Activated CD4-positive, alpha-beta memory T cell treated with anti-CD3 and anti-CD28 coated beads for 36 hours (primary cell): ENCODE measurements at regions of chr12 and their contacts with region 1.

Region 1: GRCh38 chr12:24838531-24838950 is 110.4 kb downstream of the BCAT1 start:
- DNase-seq: peak; percentile 57
- H3K4me3 Mint-ChIP-seq: peak overlapping the region; percentile 20
- H3K27ac Mint-ChIP-seq: peak overlapping the region; percentile 85
- H3K4me1 Mint-ChIP-seq: peaks cover 44% of the 10 kb centered on the region
- H3K27me3 Mint-ChIP-seq: peaks cover 5% of the 10 kb centered on the region

Region 2: GRCh38 chr12:23204933-23205778 is 1633.4 kb before region 1 on chr12:
- CTCF ChIA-PET with region 1: interaction called, 7 read pairs
- POLR2A ChIA-PET with region 1: no interaction called
- intact Hi-C with region 1: loop called (anchors 2 kb)
- DNase-seq: no peak
- H3K4me3 Mint-ChIP-seq: no peak overlapping the region
- H3K27ac Mint-ChIP-seq: no peak overlapping the region
- H3K4me1 Mint-ChIP-seq: no peaks in the 10 kb centered on the region
- H3K27me3 Mint-ChIP-seq: peaks cover 3% of the 10 kb centered on the region

Region 3: DNA sequence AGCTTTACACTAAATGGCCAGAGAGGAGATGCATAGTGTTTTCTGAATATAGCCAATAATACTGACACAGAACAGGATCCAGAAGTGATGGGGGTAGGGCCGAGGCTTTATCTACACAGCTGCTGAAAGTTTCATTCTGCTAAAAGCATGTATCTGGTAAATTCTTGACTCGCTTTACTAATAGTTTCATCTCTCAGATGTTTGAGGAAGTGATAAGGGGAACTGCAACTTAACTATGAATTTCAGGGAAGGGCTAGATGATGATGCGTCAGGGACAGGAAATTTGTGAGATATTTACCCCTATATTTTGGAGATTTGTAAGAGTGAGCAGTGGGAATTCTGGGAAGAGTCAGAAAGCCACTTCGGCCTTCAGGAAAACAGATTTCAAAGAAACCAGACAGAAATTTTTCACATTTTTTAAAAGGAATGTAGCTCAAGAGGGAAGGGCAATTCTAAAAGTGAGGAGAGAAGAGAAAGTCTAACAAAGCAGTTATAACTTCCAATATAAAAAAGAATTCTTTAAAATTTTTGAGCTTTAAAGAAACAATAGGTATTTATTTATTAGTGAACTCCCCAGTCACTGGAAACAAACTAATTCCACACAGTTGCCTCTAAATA is 132.7 kb before region 1 on chr12:
- CTCF ChIA-PET with region 1: no interaction called
- POLR2A ChIA-PET with region 1: interaction called, 16 read pairs
- intact Hi-C with region 1: loop called (anchors 1 kb)
- DNase-seq: peak; percentile 38
- H3K4me3 Mint-ChIP-seq: peak overlapping the region; percentile 6
- H3K27ac Mint-ChIP-seq: peak overlapping the region; percentile 73
- H3K4me1 Mint-ChIP-seq: peaks cover 21% of the 10 kb centered on the region
- H3K27me3 Mint-ChIP-seq: peaks cover 3% of the 10 kb centered on the region

Region 4: DNA sequence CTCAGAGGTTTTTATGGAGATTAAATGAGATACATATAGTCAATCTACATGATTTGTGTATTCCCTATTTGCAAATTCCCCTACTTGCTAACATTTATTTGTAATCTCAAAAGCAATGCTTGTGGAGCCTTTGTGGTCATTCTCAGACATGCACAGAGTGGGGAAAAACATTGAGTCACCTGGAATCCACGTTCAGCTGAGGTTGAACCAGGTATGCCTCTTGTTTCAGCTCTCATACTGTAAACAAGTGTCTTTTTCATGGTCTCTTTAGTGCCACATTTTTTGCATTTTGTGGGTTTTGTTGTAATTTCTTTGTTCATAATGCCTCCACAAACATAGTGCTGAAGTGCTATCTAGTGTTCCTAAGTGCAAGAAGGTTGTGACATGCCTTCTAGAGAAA is 71.5 kb before region 1 on chr12:
- CTCF ChIA-PET with region 1: interaction called, 4 read pairs
- POLR2A ChIA-PET with region 1: no interaction called
- intact Hi-C with region 1: loop called (anchors 1 kb)
- DNase-seq: peak; percentile 36
- H3K4me3 Mint-ChIP-seq: no peak overlapping the region
- H3K27ac Mint-ChIP-seq: peak overlapping the region; percentile 69
- H3K4me1 Mint-ChIP-seq: peaks cover 13% of the 10 kb centered on the region
- H3K27me3 Mint-ChIP-seq: peaks cover 6% of the 10 kb centered on the region

Region 5: GRCh38 chr12:24921251-24922038 is 82.9 kb after region 1 on chr12:
- CTCF ChIA-PET with region 1: interaction called, 8 read pairs
- POLR2A ChIA-PET with region 1: interaction called, 6 read pairs
- intact Hi-C with region 1: loop called (anchors 1 kb)
- DNase-seq: no peak
- H3K4me3 Mint-ChIP-seq: no peak overlapping the region
- H3K27ac Mint-ChIP-seq: no peak overlapping the region
- H3K4me1 Mint-ChIP-seq: peaks cover 33% of the 10 kb centered on the region
- H3K27me3 Mint-ChIP-seq: peaks cover 7% of the 10 kb centered on the region

Region 6: GRCh38 chr12:25020621-25021243 is 182.2 kb after region 1 on chr12:
- CTCF ChIA-PET with region 1: no interaction called
- POLR2A ChIA-PET with region 1: no interaction called
- intact Hi-C with region 1: no loop called
- DNase-seq: no peak
- H3K4me3 Mint-ChIP-seq: no peak overlapping the region
- H3K27ac Mint-ChIP-seq: no peak overlapping the region
- H3K4me1 Mint-ChIP-seq: no peaks in the 10 kb centered on the region
- H3K27me3 Mint-ChIP-seq: peaks cover 6% of the 10 kb centered on the region

Region 7: DNA sequence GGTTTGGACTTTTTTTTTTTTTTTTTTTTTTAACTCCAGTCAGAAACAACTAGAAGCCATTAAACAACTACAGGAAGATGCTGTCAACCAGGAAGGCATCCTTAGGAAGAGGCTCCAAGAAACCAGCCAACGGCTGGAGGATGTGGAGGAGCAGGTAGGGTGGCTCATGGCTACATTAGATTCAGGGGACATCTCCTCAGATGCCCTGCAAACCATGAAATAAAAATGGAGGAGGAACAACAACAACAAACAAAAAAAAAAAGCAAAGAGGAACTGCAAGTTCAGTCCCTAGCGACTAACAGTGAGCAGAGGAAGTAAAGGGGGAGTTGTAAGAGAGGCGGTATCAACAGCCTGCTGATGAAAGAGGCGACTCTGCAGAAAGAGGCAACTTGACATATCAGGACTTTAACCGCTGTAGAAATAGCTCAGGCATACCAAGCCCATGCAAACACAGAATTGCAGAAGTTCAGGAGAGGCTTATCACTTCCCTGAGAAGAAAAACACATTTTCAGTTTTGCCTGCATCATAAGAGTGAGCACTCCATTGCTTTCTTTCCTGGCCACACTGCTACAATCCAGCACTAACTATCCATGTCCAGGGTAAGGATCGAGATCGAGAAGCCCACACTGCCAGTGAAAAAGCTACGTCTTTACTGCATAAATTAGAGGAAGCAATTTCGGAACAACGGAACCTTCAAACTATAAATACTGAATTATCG is 213.8 kb after region 1 on chr12:
- CTCF ChIA-PET with region 1: no interaction called
- POLR2A ChIA-PET with region 1: interaction called, 8 read pairs
- intact Hi-C with region 1: loop called (anchors 1 kb)
- DNase-seq: peak; percentile 54
- H3K4me3 Mint-ChIP-seq: peak overlapping the region; percentile 91
- H3K27ac Mint-ChIP-seq: peak overlapping the region; percentile 97
- H3K4me1 Mint-ChIP-seq: peaks cover 41% of the 10 kb centered on the region
- H3K27me3 Mint-ChIP-seq: no peaks in the 10 kb centered on the region